ENCODE measurements at regions of chr17 and their contacts with region 1.

Region 1: DNA sequence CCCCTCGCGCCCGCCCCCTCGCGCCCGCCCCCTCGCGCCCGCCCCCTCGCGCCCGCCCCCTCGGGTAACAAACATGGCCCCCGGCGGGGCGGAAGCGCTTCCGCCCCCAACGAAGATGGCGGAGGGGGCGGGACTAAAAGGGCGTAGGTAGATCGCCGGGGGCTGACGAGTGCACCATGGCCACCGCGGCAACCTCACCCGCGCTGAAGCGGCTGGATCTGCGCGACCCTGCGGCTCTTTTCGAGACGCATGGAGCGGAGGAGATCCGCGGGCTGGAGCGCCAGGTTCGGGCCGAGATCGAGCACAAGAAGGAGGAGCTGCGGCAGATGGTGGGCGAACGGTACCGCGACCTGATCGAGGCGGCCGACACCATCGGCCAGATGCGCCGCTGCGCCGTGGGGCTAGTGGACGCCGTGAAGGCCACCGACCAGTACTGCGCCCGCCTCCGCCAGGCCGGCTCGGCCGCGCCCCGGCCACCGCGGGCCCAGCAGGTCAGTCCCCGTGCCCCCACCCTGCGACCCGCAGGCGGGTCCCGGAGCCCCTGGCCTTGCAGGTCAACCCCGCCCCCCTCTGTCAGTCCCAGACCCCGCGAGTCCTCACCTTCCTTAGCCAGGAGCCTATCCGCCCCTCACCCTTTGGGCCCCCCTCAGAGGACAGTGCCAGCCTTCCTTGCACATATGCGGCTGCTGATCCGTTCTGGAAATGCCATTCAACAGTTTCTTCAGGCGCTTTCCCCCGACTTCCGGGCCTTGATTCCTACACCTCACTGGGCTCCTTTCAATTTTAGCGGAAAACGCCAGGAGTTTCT is at the start of gene COG1:
- DNase-seq: peak; percentile 91
- ATAC-seq: peak; percentile 84
- H3K4me3 Mint-ChIP-seq: peak within 1 kb of the TSS; percentile 92
- H3K27ac Mint-ChIP-seq: peak within 1 kb of the TSS; percentile 97
- H3K4me1 Mint-ChIP-seq: peaks cover 23% of the 10 kb centered on the region
- H3K27me3 Mint-ChIP-seq: no peaks in the 10 kb centered on the region
- total RNA-seq, gene COG1: 26.6 to 33.9 TPM

Region 2: GRCh38 chr17:73103641-73104335 is 89.3 kb before region 1 on chr17:
- CTCF ChIA-PET with region 1: no interaction called
- DNase-seq: no peak
- ATAC-seq: no peak
- H3K4me3 Mint-ChIP-seq: no peak overlapping the region
- H3K27ac Mint-ChIP-seq: no peak overlapping the region
- H3K4me1 Mint-ChIP-seq: no peaks in the 10 kb centered on the region
- H3K27me3 Mint-ChIP-seq: peaks cover 6% of the 10 kb centered on the region

Region 3: DNA sequence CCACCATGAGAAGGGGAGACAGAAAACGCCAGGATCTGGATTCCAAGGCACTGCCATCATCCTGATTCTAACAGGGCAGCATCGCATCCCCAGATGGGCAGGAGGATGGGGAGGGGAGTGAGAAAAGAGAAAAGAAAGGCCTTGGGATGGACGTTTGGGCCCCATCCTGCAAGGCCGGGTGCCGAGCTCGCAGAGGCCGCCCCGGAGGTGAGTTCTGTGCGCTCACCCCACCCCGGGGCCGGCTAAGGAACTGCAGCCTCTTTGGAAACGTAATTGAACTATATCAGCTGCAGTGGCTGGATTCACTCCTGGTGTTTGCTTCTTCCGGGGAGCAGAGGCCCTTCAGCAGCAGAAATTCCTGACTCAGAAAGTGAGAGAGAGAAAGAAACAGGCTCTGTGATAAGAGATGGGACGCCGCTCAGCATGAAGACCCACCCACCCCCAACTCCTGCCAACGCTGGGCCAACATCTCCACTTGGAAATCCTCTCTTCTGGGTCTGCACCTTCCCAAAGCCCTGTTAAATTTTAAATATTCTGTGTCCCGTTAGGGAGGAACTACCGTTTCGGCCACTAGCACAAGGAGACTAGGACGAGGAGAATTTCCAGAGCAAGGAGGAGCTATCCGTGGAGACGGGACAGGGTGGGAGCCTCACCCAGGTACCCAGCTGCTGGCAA is 36.8 kb before region 1 on chr17:
- CTCF ChIA-PET with region 1: no interaction called
- DNase-seq: peak; percentile 65
- ATAC-seq: peak; percentile 92
- H3K4me3 Mint-ChIP-seq: no peak overlapping the region
- H3K27ac Mint-ChIP-seq: no peak overlapping the region
- H3K4me1 Mint-ChIP-seq: peaks cover 6% of the 10 kb centered on the region
- H3K27me3 Mint-ChIP-seq: peaks cover 25% of the 10 kb centered on the region

Region 4: DNA sequence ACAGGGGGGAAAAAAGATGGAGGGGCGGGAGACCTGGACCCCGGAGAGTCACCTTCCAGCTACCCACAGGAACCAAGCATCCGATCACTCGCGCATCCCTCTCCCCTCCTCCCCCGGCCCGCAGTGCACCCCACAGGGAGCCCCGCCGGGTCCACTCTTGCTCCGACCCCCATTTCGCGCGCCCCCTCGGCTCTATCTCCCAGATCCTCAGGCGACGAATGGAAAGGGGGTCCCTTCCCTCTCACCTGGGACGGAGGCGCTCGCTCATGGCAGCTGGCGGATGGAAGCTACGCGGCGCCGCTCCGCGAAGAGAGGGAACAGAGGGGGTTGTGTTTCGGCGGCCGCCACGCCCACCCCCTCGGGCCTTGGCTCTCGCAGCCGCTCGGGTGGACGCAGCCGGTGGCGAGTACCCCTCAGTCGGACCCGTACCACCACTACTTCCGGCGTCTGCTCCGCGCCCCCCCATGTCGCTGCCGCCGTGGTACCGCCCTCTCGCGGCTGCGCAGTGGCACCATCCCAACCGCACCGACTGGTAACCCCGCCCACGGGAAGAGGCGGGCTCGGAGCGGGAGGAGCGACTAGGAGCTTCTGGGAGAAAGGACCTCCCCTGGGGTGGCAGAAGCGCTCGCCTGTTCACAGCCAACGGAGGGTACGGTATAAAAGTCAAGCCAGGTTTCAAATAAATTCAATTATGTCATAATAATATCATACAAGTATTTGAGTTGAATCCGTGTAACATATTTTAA is 38.9 kb after region 1 on chr17:
- CTCF ChIA-PET with region 1: interaction called, 30 read pairs
- DNase-seq: peak; percentile 96
- ATAC-seq: peak; percentile 91
- H3K4me3 Mint-ChIP-seq: peak overlapping the region; percentile 85
- H3K27ac Mint-ChIP-seq: peak overlapping the region; percentile 89
- H3K4me1 Mint-ChIP-seq: peaks cover 56% of the 10 kb centered on the region
- H3K27me3 Mint-ChIP-seq: no peaks in the 10 kb centered on the region

Region 5: DNA sequence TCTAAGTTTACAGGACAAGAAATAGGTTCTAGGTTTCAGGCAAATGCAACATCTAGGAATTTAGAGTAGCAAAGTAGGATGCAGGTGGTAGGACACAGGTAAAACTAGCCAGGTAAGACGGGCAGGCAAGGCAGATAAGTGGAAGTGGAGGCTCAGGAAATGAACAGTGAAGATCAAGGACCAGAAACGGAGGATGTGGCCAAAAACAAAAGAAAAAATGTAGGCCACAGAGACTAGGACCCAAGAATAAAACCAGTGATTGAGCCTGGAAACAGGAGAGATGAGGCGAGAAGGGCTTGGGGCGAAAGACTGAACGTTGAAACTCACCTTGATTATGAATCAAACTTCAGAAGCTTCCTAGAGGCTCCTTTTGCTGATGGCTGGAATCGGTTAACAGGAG is 44.6 kb after region 1 on chr17:
- CTCF ChIA-PET with region 1: interaction called, 18 read pairs
- DNase-seq: no peak
- ATAC-seq: no peak
- H3K4me3 Mint-ChIP-seq: peak overlapping the region; percentile 15
- H3K27ac Mint-ChIP-seq: peak overlapping the region; percentile 70
- H3K4me1 Mint-ChIP-seq: peaks cover 35% of the 10 kb centered on the region
- H3K27me3 Mint-ChIP-seq: no peaks in the 10 kb centered on the region